MCF 10A (cell line): ENCODE measurements at regions of chr4 and their contacts with region 1.

Region 1: DNA sequence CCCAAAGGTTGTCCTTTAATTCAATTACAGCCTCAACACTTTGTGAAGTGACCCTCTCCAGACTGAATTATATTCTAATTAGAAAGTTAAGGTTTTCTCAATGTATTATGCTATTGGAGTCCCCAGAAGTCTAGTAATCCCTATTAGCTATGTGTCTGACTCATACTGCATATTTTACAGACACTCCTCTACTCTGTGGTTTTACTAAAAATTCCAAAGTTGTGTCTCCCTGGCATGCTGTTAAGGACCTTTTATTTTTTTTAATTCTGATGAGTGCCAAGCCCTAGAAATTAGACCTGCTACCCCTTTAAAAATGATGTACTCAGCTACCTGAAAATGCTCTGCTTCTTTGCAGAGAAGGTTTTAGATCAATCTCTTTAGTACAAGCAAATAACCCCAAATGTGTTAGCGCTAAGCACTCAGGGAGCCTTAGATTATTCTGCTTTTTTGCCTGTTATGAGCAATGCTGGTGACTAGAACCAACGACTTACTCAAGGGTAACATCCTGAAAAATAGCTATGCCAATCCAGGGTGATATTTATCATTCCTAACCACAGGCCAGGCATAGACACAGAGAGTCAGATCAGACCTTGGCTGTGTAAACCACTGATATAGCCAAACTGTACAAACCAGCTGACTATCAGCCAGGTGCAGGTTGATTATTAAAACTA is 26.1 kb upstream of the CXCL13 start:
- DNase-seq: peak; percentile 80
- H3K4me3 Mint-ChIP-seq: peak overlapping the region; percentile 23
- H3K27ac Mint-ChIP-seq: peak overlapping the region; percentile 88
- H3K4me1 Mint-ChIP-seq: peaks cover 42% of the 10 kb centered on the region
- H3K27me3 Mint-ChIP-seq: no peaks in the 10 kb centered on the region
- CTCF ChIP-seq: no peak

Region 2: DNA sequence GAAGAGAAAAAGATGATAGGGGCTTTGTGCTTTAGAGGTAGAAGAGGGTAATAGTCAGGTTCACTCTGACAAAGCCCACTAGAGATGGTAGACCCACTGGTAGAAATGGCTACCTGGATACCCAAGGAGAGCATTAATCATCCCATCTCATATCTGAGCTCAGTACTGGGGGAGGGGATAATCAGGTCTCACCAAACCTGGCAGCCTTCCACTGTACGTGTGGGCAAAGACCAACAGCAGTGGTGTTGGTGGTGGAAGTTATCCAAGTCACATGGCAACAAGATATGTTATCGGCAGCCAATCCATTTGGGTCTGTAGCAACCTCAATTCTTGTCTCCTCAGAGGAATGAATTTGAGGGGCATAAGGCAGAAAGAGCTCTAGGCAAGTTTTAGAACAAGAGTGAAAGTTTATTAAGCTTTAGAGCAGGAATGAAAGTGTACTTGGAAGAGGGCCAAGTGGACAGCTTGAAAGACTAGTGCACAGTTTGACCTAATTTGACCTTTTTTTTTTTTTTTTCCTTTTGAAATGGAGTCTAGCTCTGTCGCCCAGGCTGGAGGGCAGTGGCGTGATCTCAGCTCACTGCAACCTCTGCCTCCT is 40.9 kb before region 1 on chr4:
- CTCF ChIA-PET with region 1: interaction called, 3 read pairs
- POLR2A ChIA-PET with region 1: interaction called, 25 read pairs
- intact Hi-C with region 1: loop called (anchors 1 kb)
- DNase-seq: peak; percentile 77
- H3K4me3 Mint-ChIP-seq: peak overlapping the region; percentile 55
- H3K27ac Mint-ChIP-seq: peak overlapping the region; percentile 87
- H3K4me1 Mint-ChIP-seq: peaks cover 29% of the 10 kb centered on the region
- H3K27me3 Mint-ChIP-seq: peaks cover 31% of the 10 kb centered on the region
- CTCF ChIP-seq: no peak

Region 3: GRCh38 chr4:77564231-77564630 is 15.3 kb before region 1 on chr4:
- CTCF ChIA-PET with region 1: interaction called, 3 read pairs
- POLR2A ChIA-PET with region 1: interaction called, 26 read pairs
- intact Hi-C with region 1: no loop called
- DNase-seq: peak; percentile 45
- H3K4me3 Mint-ChIP-seq: no peak overlapping the region
- H3K27ac Mint-ChIP-seq: peak overlapping the region; percentile 89
- H3K4me1 Mint-ChIP-seq: peaks cover 45% of the 10 kb centered on the region
- H3K27me3 Mint-ChIP-seq: no peaks in the 10 kb centered on the region
- CTCF ChIP-seq: no peak